ENCODE measurements at regions of chr2 and their contacts with region 1.

Region 1: DNA sequence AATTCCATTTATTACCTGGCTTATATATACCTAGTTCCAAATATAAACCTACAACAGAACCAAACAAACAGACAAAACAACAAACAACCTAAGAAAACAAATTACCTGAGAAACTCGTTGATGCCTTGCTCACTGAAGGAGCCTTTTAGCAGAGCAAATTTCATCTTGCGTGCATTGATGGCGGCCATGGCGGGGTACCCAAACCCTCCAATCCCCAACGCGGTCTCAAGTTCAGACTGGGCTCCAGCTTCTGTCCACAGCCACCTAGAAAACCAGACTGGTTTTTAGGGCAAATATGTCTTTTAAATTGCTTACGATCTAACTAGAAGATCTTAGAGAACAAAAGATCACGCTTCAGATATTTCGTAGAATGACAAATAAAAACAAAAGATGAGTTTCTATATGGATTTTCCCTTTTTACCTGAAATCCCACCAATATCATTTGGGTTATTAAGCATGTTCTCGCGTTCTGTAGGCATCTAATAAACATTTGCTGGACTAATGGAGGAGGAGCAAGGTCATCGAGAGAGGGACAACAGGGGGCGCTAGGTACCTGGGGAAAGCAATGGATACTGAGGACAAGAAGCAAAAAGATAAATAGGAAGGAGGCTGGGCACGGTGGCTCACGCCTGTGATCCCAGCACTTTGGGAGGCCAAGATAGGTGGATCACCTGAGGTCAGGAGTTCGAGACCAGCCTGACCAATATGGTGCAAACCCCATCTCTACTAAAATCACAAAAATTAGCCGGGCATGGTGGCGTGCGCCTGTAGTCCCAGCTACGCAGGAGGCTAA is 25.2 kb downstream of the PDIA6 start:
- DNase-seq: no peak
- H3K4me3 ChIP-seq: no peak overlapping the region
- H3K27ac ChIP-seq: no peak overlapping the region
- H3K4me1 ChIP-seq: peaks cover 6% of the 10 kb centered on the region
- H3K27me3 ChIP-seq: no peaks in the 10 kb centered on the region
- CTCF ChIP-seq: peak; percentile 26 to 37

Region 2: DNA sequence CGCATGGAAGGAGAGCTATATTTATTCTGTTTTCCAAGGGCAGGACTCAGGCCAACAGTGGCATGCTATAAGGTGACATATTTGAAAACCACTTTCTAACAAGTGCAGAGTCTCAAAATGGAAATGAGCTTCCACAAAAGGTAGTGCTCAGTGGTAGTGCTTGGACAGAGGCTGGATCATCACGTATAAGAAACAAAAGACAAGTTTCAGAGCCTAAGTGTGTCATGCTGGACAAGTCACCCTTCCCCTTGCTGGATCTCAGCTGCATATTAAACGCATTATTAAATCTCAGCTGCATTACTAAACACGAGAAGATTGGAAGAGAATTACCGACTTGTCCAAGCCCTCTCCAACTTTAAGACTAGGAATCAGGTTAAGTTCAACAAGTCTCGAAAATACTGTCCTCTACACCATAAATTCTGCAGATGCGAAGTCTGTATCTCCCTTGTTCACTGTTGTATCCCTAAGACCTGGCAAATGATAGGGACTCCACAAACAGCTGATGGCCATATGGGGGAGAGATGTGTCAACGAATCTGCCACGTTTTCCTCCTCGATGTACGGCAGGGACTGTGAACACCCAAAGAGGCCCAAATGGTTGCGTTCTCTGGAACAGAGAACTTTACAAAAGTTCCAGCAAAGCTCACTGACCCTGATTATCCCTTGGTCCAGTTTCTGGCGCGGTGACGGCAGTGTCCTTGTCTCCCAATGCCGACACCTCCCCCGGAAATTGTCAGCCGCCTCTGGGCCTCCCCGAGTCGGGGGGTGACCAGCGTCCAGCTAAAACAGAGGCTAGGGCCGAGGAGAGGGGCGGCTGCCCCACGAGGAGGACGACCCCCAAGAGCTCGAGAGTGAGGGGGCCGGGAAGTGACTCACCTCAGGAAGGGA is 98.2 kb before region 1 on chr2:
- CTCF ChIA-PET with region 1: no interaction called
- dilution Hi-C with region 1: loop called (anchors 5 kb)
- in situ Hi-C with region 1: no loop called
- intact Hi-C with region 1: no loop called
- DNase-seq: peak; percentile 19
- H3K4me3 ChIP-seq: peak overlapping the region; percentile 68 to 91 (median 85)
- H3K27ac ChIP-seq: peak overlapping the region; percentile 83
- H3K4me1 ChIP-seq: peaks cover 12% of the 10 kb centered on the region
- H3K27me3 ChIP-seq: no peaks in the 10 kb centered on the region
- CTCF ChIP-seq: no peak

Region 3: DNA sequence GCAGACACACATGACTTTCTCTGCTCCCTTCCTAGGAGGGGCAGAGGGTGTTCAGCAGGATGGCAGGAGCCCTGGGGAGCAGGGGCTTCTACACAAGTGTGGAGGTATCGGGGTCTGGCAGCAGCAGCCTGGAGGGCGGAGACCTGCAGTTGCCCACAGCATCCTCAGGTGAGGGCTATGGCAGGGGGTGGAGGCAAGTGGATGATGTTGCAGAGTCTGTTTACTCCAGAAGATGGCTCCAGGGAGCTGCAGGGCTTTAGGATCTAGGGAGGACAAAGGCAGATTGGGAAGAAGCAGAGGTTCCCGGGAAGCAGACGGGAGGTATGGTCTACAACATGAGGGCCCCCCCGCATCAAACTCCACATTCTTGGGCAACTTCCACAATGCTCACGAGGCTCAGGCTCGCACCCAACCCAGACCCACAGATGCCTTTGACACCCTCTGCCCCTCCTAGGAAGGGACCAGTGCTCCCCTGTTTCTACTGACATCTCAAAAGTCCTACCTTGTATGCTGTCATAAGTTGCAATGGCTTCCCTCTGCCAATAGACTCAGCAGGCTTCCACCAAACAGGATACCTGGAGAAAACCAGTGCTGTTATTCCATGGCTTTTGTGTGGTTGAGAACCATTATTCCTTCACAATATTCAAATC is 78.0 kb before region 1 on chr2:
- CTCF ChIA-PET with region 1: interaction called, 10 read pairs
- dilution Hi-C with region 1: no loop called
- in situ Hi-C with region 1: no loop called
- intact Hi-C with region 1: loop called (anchors 5 kb)
- DNase-seq: peak; percentile 44
- H3K4me3 ChIP-seq: no peak overlapping the region
- H3K27ac ChIP-seq: no peak overlapping the region
- H3K4me1 ChIP-seq: peaks cover 6% of the 10 kb centered on the region
- H3K27me3 ChIP-seq: no peaks in the 10 kb centered on the region
- CTCF ChIP-seq: peak; percentile 64 to 83

Region 4: GRCh38 chr2:10721396-10722251 is 65.7 kb before region 1 on chr2 and contains the start of gene ATP6V1C2:
- CTCF ChIA-PET with region 1: no interaction called
- dilution Hi-C with region 1: no loop called
- in situ Hi-C with region 1: no loop called
- intact Hi-C with region 1: no loop called
- DNase-seq: no peak
- H3K4me3 ChIP-seq: peak within 1 kb of the TSS in 2 of 3 experiments; percentile 30 to 45
- H3K27ac ChIP-seq: no peak within 1 kb of the TSS
- H3K4me1 ChIP-seq: peaks cover 32% of the 10 kb centered on the region
- H3K27me3 ChIP-seq: peaks cover 27% of the 10 kb centered on the region
- CTCF ChIP-seq: no peak
- total RNA-seq, gene ATP6V1C2: under 0.01 TPM in 1 of 2 donors, not detected in the other

Region 5: GRCh38 chr2:10741139-10741538 is 46.2 kb before region 1 on chr2:
- CTCF ChIA-PET with region 1: no interaction called
- dilution Hi-C with region 1: loop called (anchors 5 kb)
- in situ Hi-C with region 1: no loop called
- intact Hi-C with region 1: no loop called
- DNase-seq: no peak
- H3K4me3 ChIP-seq: no peak overlapping the region
- H3K27ac ChIP-seq: no peak overlapping the region
- H3K4me1 ChIP-seq: no peaks in the 10 kb centered on the region
- H3K27me3 ChIP-seq: no peaks in the 10 kb centered on the region
- CTCF ChIP-seq: no peak

Region 6: DNA sequence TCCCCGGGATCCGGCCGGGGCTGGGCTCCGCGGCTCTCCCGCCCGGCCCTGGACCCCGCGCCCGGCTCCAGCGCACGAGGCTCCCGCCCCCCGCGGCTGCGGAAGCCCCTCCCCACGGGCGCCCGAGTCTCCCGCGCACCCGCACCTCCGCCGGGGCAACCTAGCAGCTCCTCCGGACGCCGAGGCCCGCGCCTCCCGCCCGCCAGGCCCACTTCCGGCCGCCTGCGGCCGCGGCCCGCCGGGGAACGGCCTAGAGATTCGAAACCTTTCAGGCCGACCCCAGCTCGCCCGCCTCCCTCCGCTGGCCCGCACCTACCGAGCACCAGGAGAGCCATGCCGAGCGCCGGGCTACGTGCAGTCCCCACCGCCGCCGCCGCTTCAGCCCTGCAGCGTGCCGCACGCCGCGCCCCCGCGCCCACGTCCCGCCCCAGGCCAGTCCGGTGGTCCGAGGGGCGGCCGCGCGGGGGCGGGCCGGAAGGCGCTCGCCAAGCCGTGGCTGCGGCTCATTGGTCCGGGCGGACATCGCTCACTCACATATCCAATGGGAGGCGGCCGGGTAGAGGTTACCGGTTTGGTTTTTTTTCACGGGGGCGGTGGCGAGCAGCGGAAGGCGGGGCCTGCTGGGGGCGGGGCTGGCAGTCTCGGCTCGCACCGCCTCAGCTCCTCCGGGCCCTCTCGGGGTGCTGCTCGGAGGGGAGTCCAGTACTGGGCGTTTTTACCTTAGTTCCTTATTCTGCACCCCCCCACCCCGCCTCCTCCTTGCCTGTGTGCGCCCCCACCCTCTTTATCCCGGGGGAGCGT is 25.2 kb after region 1 on chr2 and contains the start of gene PDIA6:
- CTCF ChIA-PET with region 1: no interaction called
- dilution Hi-C with region 1: loop called (anchors 5 kb)
- in situ Hi-C with region 1: no loop called
- intact Hi-C with region 1: no loop called
- DNase-seq: peak; percentile 95
- H3K4me3 ChIP-seq: peak within 1 kb of the TSS; percentile 63 to 76 (median 67)
- H3K27ac ChIP-seq: peak within 1 kb of the TSS; percentile 66
- H3K4me1 ChIP-seq: peaks cover 14% of the 10 kb centered on the region
- H3K27me3 ChIP-seq: no peaks in the 10 kb centered on the region
- CTCF ChIP-seq: no peak
- total RNA-seq, gene PDIA6: 168 to 256 TPM

Region 7: GRCh38 chr2:10826026-10826425 is 38.7 kb after region 1 on chr2:
- CTCF ChIA-PET with region 1: no interaction called
- dilution Hi-C with region 1: no loop called
- in situ Hi-C with region 1: no loop called
- intact Hi-C with region 1: no loop called
- DNase-seq: no peak
- H3K4me3 ChIP-seq: no peak overlapping the region
- H3K27ac ChIP-seq: no peak overlapping the region
- H3K4me1 ChIP-seq: no peaks in the 10 kb centered on the region
- H3K27me3 ChIP-seq: peaks cover 7% of the 10 kb centered on the region
- CTCF ChIP-seq: no peak

Measured in mammary epithelial cell (primary cell).